ENCODE measurements at regions of chr12 and their contacts with region 1.

Region 1: GRCh38 chr12:57782608-57783465 is at the start of gene TSFM:
- DNase-seq: peak; percentile 99
- ATAC-seq: peak; percentile 96
- total RNA-seq, gene TSFM: 14.6 TPM

Region 2: GRCh38 chr12:57687862-57688261 is 95.0 kb before region 1 on chr12:
- intact Hi-C with region 1: no loop called
- DNase-seq: no peak
- ATAC-seq: no peak

Region 3: DNA sequence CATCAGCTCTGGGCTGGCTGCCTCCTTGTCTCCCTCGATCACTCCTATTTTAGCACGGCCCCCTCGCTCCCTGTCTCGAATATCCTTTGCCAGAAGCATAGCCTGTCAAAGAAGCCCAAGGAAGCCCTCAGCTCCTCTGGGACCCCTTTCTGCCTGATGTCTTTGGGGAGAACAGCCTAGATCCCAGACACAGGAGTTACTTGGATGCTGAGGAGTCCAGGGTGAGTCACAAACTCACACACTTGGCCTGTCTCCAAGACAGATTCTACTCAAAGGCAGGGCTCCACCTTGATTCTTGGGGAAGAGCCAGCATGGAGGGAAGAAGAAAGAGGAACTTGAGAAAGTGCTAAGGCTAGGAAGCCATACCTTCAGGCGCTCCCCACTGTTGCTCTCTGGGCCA is 27.6 kb after region 1 on chr12:
- intact Hi-C with region 1: no loop called
- DNase-seq: no peak
- ATAC-seq: no peak

Region 4: GRCh38 chr12:57904848-57905811 is 122.3 kb after region 1 on chr12:
- intact Hi-C with region 1: loop called (anchors 10 kb)
- DNase-seq: peak; percentile 91
- ATAC-seq: peak; percentile 92